Naive thymus-derived CD4-positive, alpha-beta T cell (primary cell): ENCODE measurements at regions of chr9 and their contacts with region 1.

Region 1: GRCh38 chr9:6008169-6008979 is 7.0 kb downstream of the RANBP6 start:
- DNase-seq: peak; percentile 79 to 98 (median 93)
- ATAC-seq: peak; percentile 84
- H3K4me3 ChIP-seq: peak overlapping the region; percentile 75
- H3K4me3 Mint-ChIP-seq: peak overlapping the region; percentile 74 to 99 (median 94)
- H3K27ac ChIP-seq: peak overlapping the region; percentile 97
- H3K27ac Mint-ChIP-seq: peak overlapping the region; percentile 83 to 97 (median 91)
- H3K4me1 ChIP-seq: peaks cover 20 to 36% of the 10 kb centered on the region in 2 donors
- H3K4me1 Mint-ChIP-seq: peaks cover 26 to 75% (median 65%) of the 10 kb centered on the region in 7 donors
- H3K27me3 ChIP-seq: no peaks in the 10 kb centered on the region
- H3K27me3 Mint-ChIP-seq: no peaks in the 10 kb centered on the region

Region 2: DNA sequence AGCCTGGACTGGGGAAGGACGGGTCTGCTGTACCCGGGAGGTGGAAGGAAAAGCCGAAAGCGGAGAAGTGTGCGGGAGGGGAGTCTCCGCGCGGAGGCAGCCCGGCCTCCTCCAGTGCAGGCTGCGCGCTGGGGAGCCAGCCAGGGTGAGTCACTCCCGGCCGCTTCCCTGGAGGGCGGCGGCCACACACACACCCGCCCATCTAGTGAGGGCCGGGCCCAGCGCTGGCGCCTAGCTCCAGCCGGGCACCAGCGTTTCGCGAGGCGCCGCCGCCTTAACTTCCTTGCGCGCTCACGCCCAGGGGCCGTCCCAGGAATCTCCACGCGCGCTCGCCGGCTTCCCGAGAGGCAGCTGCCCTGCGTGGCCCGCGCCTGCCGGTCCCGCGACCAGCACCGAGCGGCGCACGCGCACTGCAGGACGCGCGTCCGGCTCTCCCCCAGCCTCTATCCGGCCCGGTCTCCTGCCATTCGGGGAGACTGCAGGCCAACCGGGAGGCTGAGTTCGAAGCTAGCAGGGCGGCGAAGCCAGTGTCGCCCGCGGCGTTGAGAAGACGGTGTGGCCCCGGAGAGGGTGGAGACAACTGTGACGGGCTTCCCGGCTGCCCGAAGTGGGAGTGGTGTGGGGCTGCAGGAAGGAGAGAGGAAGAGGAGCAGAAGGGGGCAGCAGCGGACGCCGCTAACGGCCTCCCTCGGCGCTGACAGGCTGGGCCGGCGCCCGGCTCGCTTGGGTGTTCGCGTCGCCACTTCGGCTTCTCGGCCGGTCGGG is 1023.6 kb before region 1 on chr9 and contains the start of gene JAK2:
- CTCF ChIA-PET with region 1: no interaction called
- POLR2A ChIA-PET with region 1: no interaction called
- intact Hi-C with region 1: loop called in 1 of 2 experiments (anchors 2 kb)
- DNase-seq: peak; percentile 62 to 85 (median 72)
- ATAC-seq: peak; percentile 87
- H3K4me3 ChIP-seq: peak within 1 kb of the TSS; percentile 52
- H3K4me3 Mint-ChIP-seq: peak within 1 kb of the TSS; percentile 83 to 98 (median 94)
- H3K27ac ChIP-seq: peak within 1 kb of the TSS; percentile 78
- H3K27ac Mint-ChIP-seq: peak within 1 kb of the TSS; percentile 80 to 94 (median 90)
- H3K4me1 ChIP-seq: peaks cover 20 to 32% of the 10 kb centered on the region in 2 donors
- H3K4me1 Mint-ChIP-seq: peaks cover 20 to 41% (median 26%) of the 10 kb centered on the region in 7 donors
- H3K27me3 ChIP-seq: no peaks in the 10 kb centered on the region
- H3K27me3 Mint-ChIP-seq: no peaks in the 10 kb centered on the region
- total RNA-seq, gene JAK2: 11.7 to 76.0 (median 17.5) TPM

Region 3: GRCh38 chr9:5799314-5799713 is 209.1 kb before region 1 on chr9:
- CTCF ChIA-PET with region 1: no interaction called
- POLR2A ChIA-PET with region 1: no interaction called
- intact Hi-C with region 1: loop called in 1 of 2 experiments (anchors 5 kb)
- DNase-seq: peak in 5 of 9 donors; percentile 7 to 34 (median 21)
- ATAC-seq: peak; percentile 38
- H3K4me3 ChIP-seq: no peak overlapping the region
- H3K4me3 Mint-ChIP-seq: peak overlapping the region in 2 of 10 donors; percentile 6 to 23
- H3K27ac ChIP-seq: no peak overlapping the region
- H3K27ac Mint-ChIP-seq: peak overlapping the region in 4 of 9 donors; percentile 40 to 67 (median 58)
- H3K4me1 ChIP-seq: peaks cover 5% of the 10 kb centered on the region in 2 donors
- H3K4me1 Mint-ChIP-seq: peaks cover 4 to 36% (median 23%) of the 10 kb centered on the region in 7 donors
- H3K27me3 ChIP-seq: no peaks in the 10 kb centered on the region
- H3K27me3 Mint-ChIP-seq: no peaks in the 10 kb centered on the region

Region 4: DNA sequence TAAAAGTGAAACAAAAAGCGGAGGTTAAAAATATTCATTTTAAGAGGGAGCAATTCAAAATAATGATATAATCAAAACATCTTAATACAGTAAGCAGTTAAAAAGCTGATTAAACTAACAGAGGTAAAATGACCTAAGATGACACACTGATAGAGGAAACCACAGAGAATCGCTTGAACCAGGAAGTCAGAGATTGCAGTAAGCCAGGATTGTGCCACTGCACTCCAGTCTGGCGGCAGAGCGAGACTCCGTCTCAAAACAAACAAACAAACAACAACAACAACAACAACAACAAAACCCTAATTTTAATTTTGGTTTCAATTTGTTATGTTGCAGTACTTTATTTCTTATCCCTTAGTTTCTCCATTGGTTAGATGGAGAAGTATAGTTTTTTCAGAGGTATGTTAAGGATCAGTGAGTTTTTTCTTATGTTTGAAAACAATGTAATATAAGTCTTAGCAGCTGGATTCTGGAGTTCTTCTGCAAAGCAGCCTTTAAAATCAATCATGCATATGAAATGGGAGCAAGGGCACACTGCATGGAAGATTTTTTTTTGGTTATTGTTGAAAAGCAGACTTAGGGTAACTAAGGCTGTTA is 59.2 kb before region 1 on chr9:
- CTCF ChIA-PET with region 1: no interaction called
- POLR2A ChIA-PET with region 1: no interaction called
- intact Hi-C with region 1: loop called in 1 of 2 experiments (anchors 5 kb)
- DNase-seq: peak in 6 of 9 donors; percentile 5 to 27 (median 16)
- ATAC-seq: peak; percentile 81
- H3K4me3 ChIP-seq: no peak overlapping the region
- H3K4me3 Mint-ChIP-seq: peak overlapping the region; percentile 6 to 71 (median 40)
- H3K27ac ChIP-seq: no peak overlapping the region
- H3K27ac Mint-ChIP-seq: peak overlapping the region in 2 of 9 donors; percentile 25 to 48
- H3K4me1 ChIP-seq: peaks cover 8 to 14% of the 10 kb centered on the region in 2 donors
- H3K4me1 Mint-ChIP-seq: peaks cover 5 to 42% (median 24%) of the 10 kb centered on the region in 7 donors
- H3K27me3 ChIP-seq: no peaks in the 10 kb centered on the region
- H3K27me3 Mint-ChIP-seq: no peaks in the 10 kb centered on the region

Region 5: GRCh38 chr9:6068983-6069382 is 60.6 kb after region 1 on chr9:
- CTCF ChIA-PET with region 1: no interaction called
- POLR2A ChIA-PET with region 1: interaction called, 7 read pairs
- intact Hi-C with region 1: loop called in 1 of 2 experiments (anchors 2 kb)
- DNase-seq: peak in 7 of 9 donors; percentile 30 to 73 (median 63)
- ATAC-seq: peak; percentile 97
- H3K4me3 ChIP-seq: peak overlapping the region; percentile 16
- H3K4me3 Mint-ChIP-seq: peak overlapping the region; percentile 54 to 77 (median 72)
- H3K27ac ChIP-seq: peak overlapping the region; percentile 48
- H3K27ac Mint-ChIP-seq: peak overlapping the region; percentile 86 to 96 (median 93)
- H3K4me1 ChIP-seq: peaks cover 8 to 21% of the 10 kb centered on the region in 2 donors
- H3K4me1 Mint-ChIP-seq: peaks cover 17 to 28% (median 27%) of the 10 kb centered on the region in 7 donors
- H3K27me3 ChIP-seq: no peaks in the 10 kb centered on the region
- H3K27me3 Mint-ChIP-seq: no peaks in the 10 kb centered on the region

Region 6: GRCh38 chr9:6757456-6758247 is 749.3 kb after region 1 on chr9 and contains the start of gene KDM4C:
- CTCF ChIA-PET with region 1: no interaction called
- POLR2A ChIA-PET with region 1: interaction called, 17 read pairs
- intact Hi-C with region 1: loop called (anchors 1 kb)
- DNase-seq: peak; percentile 92 to 97 (median 94)
- ATAC-seq: peak; percentile 87
- H3K4me3 ChIP-seq: peak within 1 kb of the TSS; percentile 71
- H3K4me3 Mint-ChIP-seq: peak within 1 kb of the TSS; percentile 89 to 99 (median 96)
- H3K27ac ChIP-seq: peak within 1 kb of the TSS; percentile 98
- H3K27ac Mint-ChIP-seq: peak within 1 kb of the TSS; percentile 98 to 100 (median 100)
- H3K4me1 ChIP-seq: peaks cover 9 to 12% of the 10 kb centered on the region in 2 donors
- H3K4me1 Mint-ChIP-seq: peaks cover 12 to 41% (median 26%) of the 10 kb centered on the region in 7 donors
- H3K27me3 ChIP-seq: no peaks in the 10 kb centered on the region
- H3K27me3 Mint-ChIP-seq: no peaks in the 10 kb centered on the region
- total RNA-seq, gene KDM4C: 68.6 to 100 (median 93.3) TPM